H1 (cell line): ENCODE measurements at regions of chr1 and their contacts with region 1.

Region 1: DNA sequence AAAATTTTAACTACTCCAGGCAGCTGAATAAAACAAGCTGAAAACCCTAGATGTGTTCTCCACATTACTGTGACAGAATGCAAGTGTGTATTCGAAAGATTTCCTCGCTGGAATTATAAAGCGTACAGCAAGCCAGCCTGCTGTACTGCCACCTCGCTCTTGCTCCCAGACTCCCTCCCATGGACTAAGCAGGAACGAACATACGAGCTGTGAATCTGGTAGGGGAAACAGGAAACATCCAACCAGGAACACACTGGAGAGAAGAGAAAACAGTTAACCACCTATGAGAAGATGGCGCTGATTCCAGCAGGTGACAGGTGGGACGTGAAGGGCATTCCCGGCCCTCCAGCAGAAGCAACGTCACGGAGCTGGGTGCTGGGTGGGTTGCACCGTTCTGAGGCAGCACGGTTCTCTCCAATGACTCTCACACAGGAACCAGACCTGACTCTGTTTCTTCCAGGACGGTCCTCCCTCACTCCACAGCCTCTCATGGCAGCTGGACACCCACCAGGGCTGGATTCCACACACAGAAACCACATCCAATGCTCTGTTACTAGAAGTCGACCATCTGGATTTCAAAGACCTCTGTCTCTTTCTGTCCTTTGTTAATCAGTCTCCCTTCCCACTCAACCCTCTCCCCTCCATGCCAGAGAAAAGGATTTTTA is 219.2 kb downstream of the RERE start:
- DNase-seq: no peak
- H3K4me3 ChIP-seq: no peak overlapping the region
- H3K27ac ChIP-seq: no peak overlapping the region
- H3K4me1 ChIP-seq: peaks cover 0 to 11% (median 4%) of the 10 kb centered on the region in 4 experiments; a peak in 3 of 7 replicates
- H3K27me3 ChIP-seq: no peaks in the 10 kb centered on the region
- CTCF ChIP-seq: peak in 2 of 3 experiments; percentile 19 to 36; a peak in 2 of 4 replicates
- EP300 ChIP-seq: no peak
- POLR2A ChIP-seq: no peak
- RAD21 ChIP-seq: peak; percentile 10 to 37; a peak in 1 of 4 replicates

Region 2: DNA sequence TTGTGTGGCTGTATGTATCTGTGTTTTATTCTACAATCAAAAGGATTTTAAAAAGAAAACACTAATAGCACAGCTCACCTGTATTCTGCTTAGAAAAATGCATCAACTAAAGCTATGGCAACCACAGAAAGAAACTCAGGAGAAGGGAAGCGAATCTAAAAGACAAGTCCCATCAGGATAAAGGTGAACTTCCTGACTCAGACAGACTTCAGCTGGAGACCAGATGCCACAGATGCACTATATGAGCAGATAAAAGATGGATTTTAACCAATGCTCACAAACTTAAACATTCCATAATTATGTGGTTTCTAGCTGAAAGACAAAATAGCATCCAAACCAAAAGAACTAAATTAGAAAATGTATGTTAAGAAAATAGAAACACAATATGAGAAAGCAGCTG is 11.8 kb before region 1 on chr1:
- CTCF ChIA-PET with region 1: interaction called, 16 read pairs
- POLR2A ChIA-PET with region 1: interaction called, 7 read pairs
- DNase-seq: no peak
- H3K4me3 ChIP-seq: no peak overlapping the region
- H3K27ac ChIP-seq: no peak overlapping the region
- H3K4me1 ChIP-seq: peaks cover 0 to 6% (median 1%) of the 10 kb centered on the region in 4 experiments; a peak in 5 of 7 replicates
- H3K27me3 ChIP-seq: no peaks in the 10 kb centered on the region
- CTCF ChIP-seq: no peak
- EP300 ChIP-seq: no peak
- POLR2A ChIP-seq: no peak
- RAD21 ChIP-seq: no peak